ENCODE measurements at regions of chr6 and their contacts with region 1.

Region 1: DNA sequence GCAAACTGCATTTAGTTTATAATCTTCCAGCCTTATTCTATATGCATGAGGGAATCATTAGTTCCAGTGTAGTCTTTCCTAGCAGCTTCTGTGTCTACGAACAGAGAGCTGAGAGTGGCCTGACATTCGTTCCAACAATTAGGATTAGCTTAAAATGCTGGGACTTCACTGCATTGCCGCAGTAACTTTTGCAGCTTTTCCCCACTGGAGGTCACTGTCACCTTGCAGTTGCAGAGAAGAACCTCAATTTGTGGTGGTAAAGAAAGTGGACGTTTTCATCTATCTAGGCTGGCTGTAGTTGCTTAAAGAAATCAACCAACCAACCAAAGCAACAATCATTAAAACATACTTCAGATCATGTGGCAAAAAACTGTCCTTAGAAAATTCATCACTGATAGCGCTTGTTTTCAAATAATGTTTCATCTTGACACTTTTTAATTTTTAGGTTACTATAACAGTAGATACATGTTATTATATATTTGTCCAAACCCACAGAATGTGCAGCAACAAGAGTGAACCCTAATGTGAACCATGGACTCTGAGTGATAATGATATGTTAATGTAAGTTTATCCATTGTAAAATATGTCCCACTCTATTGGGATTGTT is 12.2 kb downstream of the MYLK4 start:
- DNase-seq: peak; percentile 72
- H3K4me3 ChIP-seq: no peak overlapping the region
- H3K27ac ChIP-seq: no peak overlapping the region
- H3K4me1 ChIP-seq: no peaks in the 10 kb centered on the region
- H3K27me3 ChIP-seq: no peaks in the 10 kb centered on the region
- CTCF ChIP-seq: peak; percentile 54 to 64
- POLR2A ChIP-seq: no peak

Region 2: DNA sequence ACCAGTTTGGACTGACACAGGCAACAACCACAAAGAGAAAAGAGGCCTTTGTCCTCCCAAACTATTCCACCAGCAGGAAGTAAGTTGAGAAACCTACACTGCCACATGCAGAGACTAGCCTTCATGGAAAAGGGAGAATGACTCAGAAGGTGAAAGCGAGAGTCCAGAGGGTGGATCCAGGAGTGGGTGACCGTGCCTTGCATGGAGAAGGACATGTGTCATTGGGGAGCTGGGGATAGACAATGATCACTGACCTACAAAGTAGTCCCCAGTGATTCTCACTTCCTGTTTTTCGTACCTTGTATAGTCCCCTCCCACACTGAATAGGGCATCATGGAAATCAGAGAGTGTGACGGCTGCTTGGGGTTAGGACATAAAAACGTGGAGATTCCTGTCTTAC is 79.7 kb before region 1 on chr6:
- CTCF ChIA-PET with region 1: no interaction called
- POLR2A ChIA-PET with region 1: no interaction called
- dilution Hi-C with region 1: no loop called
- intact Hi-C with region 1: loop called (anchors 5 kb)
- DNase-seq: no peak
- H3K4me3 ChIP-seq: no peak overlapping the region
- H3K27ac ChIP-seq: no peak overlapping the region
- H3K4me1 ChIP-seq: no peaks in the 10 kb centered on the region
- H3K27me3 ChIP-seq: no peaks in the 10 kb centered on the region
- CTCF ChIP-seq: no peak
- POLR2A ChIP-seq: no peak

Region 3: DNA sequence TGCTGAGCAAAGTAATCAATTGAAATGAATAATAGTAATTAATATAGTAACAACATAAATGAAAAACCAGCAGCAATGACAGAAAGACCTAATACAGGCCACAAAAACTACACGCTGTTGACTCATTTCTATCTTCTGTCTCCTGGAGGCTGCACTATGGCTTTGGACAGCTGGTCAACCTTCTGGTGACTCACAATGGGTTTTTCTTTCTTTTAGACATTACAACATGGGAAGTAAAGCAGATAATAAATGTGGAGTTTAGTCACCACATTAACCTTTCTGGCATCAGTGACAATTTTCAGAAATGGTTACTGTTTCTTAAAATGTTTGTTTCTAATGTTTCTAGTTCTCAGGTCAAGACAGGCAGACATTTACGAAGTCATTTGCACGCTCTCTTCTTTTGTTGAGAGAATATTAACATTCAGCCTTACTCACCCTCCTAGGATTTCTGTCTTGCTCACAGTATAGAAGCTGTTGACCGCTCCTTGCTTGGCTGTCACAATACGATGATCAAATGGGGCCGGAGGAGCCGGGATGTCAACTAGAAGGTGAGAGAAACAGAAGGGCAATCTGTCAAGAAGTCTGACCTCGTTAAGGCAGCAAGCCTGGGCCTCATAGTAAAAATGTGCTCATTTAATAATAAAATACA is 49.9 kb before region 1 on chr6:
- CTCF ChIA-PET with region 1: no interaction called
- POLR2A ChIA-PET with region 1: no interaction called
- dilution Hi-C with region 1: no loop called
- intact Hi-C with region 1: no loop called
- DNase-seq: peak; percentile 24
- H3K4me3 ChIP-seq: no peak overlapping the region
- H3K27ac ChIP-seq: no peak overlapping the region
- H3K4me1 ChIP-seq: no peaks in the 10 kb centered on the region
- H3K27me3 ChIP-seq: no peaks in the 10 kb centered on the region
- CTCF ChIP-seq: no peak
- POLR2A ChIP-seq: no peak

Region 4: GRCh38 chr6:2725999-2726567 is 12.4 kb before region 1 on chr6:
- CTCF ChIA-PET with region 1: interaction called, 40 read pairs
- POLR2A ChIA-PET with region 1: no interaction called
- dilution Hi-C with region 1: no loop called
- intact Hi-C with region 1: no loop called
- DNase-seq: peak; percentile 68
- H3K4me3 ChIP-seq: no peak overlapping the region
- H3K27ac ChIP-seq: peak overlapping the region; percentile 75
- H3K4me1 ChIP-seq: peaks cover 9% of the 10 kb centered on the region
- H3K27me3 ChIP-seq: no peaks in the 10 kb centered on the region
- CTCF ChIP-seq: no peak
- POLR2A ChIP-seq: no peak

Measured in endothelial cell of umbilical vein (primary cell).